PC-3 (cell line): ENCODE measurements at regions of chr3 and their contacts with region 1.

Region 1: DNA sequence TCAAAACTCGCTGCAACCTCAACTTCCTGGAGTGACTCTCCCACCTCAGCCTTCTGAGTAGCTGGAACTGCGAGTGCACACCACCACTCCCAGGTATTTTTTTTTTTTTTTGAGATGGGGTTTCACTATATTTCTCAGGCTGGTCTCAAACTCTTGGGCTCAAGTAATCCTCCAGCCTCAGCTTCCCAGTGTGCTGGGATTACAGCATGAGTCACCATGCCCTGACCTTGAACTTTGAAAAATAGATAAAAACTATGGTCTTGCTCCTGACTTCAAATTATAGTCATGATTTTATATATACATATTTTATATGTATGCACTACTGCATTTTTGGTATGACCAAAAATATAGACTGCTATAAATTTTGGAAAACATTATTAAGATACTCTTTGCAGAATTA is 6.9 kb upstream of the PLSCR5 start:
- DNase-seq: no peak
- ATAC-seq: no peak
- H3K4me3 ChIP-seq: no peak overlapping the region
- H3K27ac ChIP-seq: no peak overlapping the region
- H3K4me1 ChIP-seq: no peaks in the 10 kb centered on the region
- H3K27me3 ChIP-seq: no peaks in the 10 kb centered on the region
- CTCF ChIP-seq: no peak

Region 2: GRCh38 chr3:146625117-146625775 is 13.2 kb after region 1 on chr3:
- CTCF ChIA-PET with region 1: no interaction called
- POLR2A ChIA-PET with region 1: interaction called, 19 read pairs
- intact Hi-C with region 1: no loop called
- DNase-seq: peak; percentile 31
- ATAC-seq: peak; percentile 56
- H3K4me3 ChIP-seq: peak overlapping the region; percentile 53
- H3K27ac ChIP-seq: no peak overlapping the region
- H3K4me1 ChIP-seq: no peaks in the 10 kb centered on the region
- H3K27me3 ChIP-seq: no peaks in the 10 kb centered on the region
- CTCF ChIP-seq: no peak

Region 3: GRCh38 chr3:146640955-146641867 is 29.2 kb after region 1 on chr3:
- CTCF ChIA-PET with region 1: no interaction called
- POLR2A ChIA-PET with region 1: no interaction called
- intact Hi-C with region 1: no loop called
- DNase-seq: peak; percentile 77
- ATAC-seq: peak; percentile 85
- H3K4me3 ChIP-seq: no peak overlapping the region
- H3K27ac ChIP-seq: no peak overlapping the region
- H3K4me1 ChIP-seq: no peaks in the 10 kb centered on the region
- H3K27me3 ChIP-seq: no peaks in the 10 kb centered on the region
- CTCF ChIP-seq: peak; percentile 67